GM12878 (cell line): ENCODE measurements at regions of chr19 and their contacts with region 1.

Region 1: DNA sequence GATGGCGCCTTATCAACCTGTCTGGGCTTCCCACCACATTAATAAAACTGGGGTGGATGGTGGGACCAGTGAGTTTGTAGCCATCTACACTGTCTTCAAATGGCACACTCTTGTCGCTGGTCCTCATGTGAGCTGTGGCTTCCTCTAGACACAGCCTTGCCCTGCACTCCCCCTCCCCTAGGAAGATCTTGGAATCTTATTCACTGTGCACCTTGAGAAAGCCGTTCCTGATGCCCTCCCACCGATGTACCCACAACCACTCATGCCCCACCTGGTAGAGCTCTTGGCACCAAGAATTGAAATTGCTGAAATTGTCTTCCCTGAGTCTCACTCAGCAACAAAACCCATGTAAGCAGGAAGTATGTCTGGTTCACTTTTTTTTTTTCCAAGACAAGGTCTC is 146.0 kb downstream of the PTPRS start:
- DNase-seq: no peak
- ATAC-seq: no peak
- H3K4me3 ChIP-seq: no peak overlapping the region
- H3K27ac ChIP-seq: no peak overlapping the region
- H3K4me1 ChIP-seq: no peaks in the 10 kb centered on the region
- H3K27me3 ChIP-seq: no peaks in the 10 kb centered on the region
- CTCF ChIP-seq: no peak
- EP300 ChIP-seq: no peak
- POLR2A ChIP-seq: no peak
- RAD21 ChIP-seq: no peak

Region 2: DNA sequence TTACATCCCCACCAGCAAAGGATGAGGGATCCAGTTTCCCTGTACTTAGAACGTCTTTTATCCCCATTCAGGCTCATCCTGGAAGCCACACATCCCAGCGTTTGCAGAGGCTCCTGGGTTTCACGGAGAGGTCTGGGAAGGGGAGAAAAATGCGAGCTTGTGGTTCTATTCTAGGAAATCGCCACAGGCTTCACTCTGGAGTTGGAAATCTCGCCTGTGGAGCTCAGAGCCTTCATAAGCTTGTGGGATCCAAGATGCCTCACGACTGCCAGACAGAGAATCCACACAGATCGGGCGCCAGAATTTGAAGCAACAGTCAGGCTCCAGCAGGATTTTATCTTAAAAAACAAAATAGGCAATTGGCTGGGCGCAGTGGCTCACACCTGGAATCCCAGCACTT is 11.9 kb before region 1 on chr19:
- CTCF ChIA-PET with region 1: no interaction called
- POLR2A ChIA-PET with region 1: no interaction called
- RAD21 ChIA-PET with region 1: no interaction called
- SMC1A ChIA-PET with region 1: no interaction called
- in situ Hi-C with region 1: no loop called
- intact Hi-C with region 1: no loop called
- DNase-seq: no peak
- ATAC-seq: no peak
- H3K4me3 ChIP-seq: no peak overlapping the region
- H3K27ac ChIP-seq: no peak overlapping the region
- H3K4me1 ChIP-seq: no peaks in the 10 kb centered on the region
- H3K27me3 ChIP-seq: no peaks in the 10 kb centered on the region
- CTCF ChIP-seq: no peak
- EP300 ChIP-seq: no peak
- POLR2A ChIP-seq: no peak
- RAD21 ChIP-seq: no peak

Region 3: DNA sequence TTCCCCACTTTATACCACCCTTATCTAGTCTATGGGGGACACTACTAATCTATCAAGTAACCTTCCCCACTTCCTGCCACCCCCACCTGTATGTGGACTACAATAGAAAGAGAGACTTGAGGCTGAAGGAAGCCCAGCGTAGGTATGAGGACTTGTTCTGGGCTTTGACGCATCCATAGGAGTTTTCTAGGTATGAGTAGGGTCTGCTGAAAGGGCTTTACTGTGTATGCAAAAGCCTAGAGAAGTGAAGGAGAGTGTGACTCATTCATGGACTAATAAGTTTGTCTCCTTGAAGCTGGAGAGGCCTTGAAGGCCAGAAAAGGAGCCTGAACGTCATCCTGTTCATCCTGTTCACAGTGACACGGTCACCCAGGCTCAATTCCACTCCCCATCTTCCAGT is 351.3 kb after region 1 on chr19:
- CTCF ChIA-PET with region 1: no interaction called
- POLR2A ChIA-PET with region 1: interaction called, 10 read pairs
- RAD21 ChIA-PET with region 1: no interaction called
- SMC1A ChIA-PET with region 1: no interaction called
- in situ Hi-C with region 1: no loop called
- intact Hi-C with region 1: no loop called
- DNase-seq: no peak
- ATAC-seq: no peak
- H3K4me3 ChIP-seq: no peak overlapping the region
- H3K27ac ChIP-seq: no peak overlapping the region
- H3K4me1 ChIP-seq: no peaks in the 10 kb centered on the region
- H3K27me3 ChIP-seq: no peaks in the 10 kb centered on the region
- CTCF ChIP-seq: no peak
- EP300 ChIP-seq: no peak
- POLR2A ChIP-seq: no peak
- RAD21 ChIP-seq: no peak